ENCODE measurements at regions of chr3 and their contacts with region 1.

Region 1: DNA sequence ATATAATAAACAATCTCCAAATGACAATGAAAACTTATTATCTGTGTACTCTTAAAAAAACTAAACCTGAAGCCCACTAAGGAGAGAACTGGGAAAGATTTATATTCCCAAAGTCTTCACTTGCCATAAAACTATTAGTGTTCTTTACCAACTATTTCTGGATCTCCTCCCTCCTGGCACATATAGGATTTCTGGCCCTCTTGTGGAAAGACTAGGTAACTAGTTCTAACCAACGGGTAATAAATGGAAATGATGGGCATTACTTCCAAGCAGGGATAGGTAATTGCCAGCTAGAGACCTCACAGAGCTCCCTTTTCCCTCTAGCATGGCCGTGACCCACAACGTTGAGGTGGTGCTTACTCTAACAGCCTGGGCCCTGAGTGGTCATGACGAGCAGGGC is 110.1 kb downstream of the DNAH12 start:
- DNase-seq: no peak
- ATAC-seq: peak in 3 of 4 donors; percentile 47 to 75 (median 60)
- H3K4me3 ChIP-seq: no peak overlapping the region
- H3K27ac ChIP-seq: no peak overlapping the region
- H3K4me1 ChIP-seq: no peaks in the 10 kb centered on the region
- H3K27me3 ChIP-seq: no peaks in the 10 kb centered on the region
- CTCF ChIP-seq: peak in 1 of 4 donors; percentile 19

Region 2: GRCh38 chr3:57852896-57853295 is 418.9 kb after region 1 on chr3:
- intact Hi-C with region 1: loop called in 1 of 3 experiments (anchors 10 kb)
- DNase-seq: no peak
- ATAC-seq: peak in 2 of 4 donors; percentile 39 to 57
- H3K4me3 ChIP-seq: no peak overlapping the region
- H3K27ac ChIP-seq: no peak overlapping the region
- H3K4me1 ChIP-seq: no peaks in the 10 kb centered on the region
- H3K27me3 ChIP-seq: no peaks in the 10 kb centered on the region
- CTCF ChIP-seq: no peak